Head of caudate nucleus (tissue), 42 donors: ENCODE measurements at regions of chr2 and their contacts with region 1.

Region 1: DNA sequence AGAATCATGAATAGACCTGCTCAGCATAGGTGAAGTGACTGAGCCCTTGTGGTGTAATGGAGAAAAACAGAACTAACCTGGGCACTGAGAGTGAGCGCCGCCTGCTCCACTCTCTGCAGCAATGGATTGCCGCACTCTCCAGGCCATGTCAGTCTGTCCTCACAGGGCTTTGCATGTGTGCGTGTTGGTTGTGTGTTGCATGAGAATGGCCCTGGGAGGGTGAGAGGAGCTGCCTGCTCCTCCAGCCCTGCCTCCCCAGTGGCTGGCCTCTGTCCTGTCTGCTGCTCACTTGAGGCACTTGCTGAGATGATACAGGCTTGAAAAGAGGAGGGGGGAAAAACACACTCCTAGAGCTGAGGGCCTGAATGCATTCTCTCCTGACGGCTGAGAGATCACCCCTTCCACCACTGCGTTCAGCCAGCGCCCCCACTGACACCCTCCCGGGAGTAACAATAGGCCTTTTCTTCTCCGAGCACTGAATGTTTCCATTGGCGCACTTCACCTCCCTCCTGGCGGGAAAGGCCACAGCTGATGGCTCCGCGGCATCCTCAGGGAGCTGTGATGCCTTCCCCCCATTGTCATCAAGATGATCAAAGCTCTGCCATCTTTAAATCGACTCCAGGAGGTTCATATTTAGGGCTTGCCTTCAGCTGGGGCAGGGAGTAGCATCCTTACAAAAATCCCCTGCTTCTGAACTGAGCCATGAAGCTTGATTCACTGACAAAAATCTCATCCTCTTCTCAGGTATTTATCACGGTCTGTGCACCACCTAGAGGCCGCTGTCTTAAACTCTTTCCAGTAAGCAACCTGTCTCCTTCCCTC is 49.9 kb upstream of the DAPL1 start:
- DNase-seq: peak; percentile 61 to 88 (median 78)

Region 2: GRCh38 chr2:158034199-158034866 is 710.9 kb before region 1 on chr2:
- intact Hi-C with region 1: loop called (anchors 5 kb)
- DNase-seq: peak in 25 of 42 donors; percentile 5 to 74 (median 37)

Region 3: GRCh38 chr2:158656492-158657229 is 88.6 kb before region 1 on chr2:
- intact Hi-C with region 1: no loop called
- DNase-seq: no peak